ENCODE measurements at regions of chr17 and their contacts with region 1.

Region 1: DNA sequence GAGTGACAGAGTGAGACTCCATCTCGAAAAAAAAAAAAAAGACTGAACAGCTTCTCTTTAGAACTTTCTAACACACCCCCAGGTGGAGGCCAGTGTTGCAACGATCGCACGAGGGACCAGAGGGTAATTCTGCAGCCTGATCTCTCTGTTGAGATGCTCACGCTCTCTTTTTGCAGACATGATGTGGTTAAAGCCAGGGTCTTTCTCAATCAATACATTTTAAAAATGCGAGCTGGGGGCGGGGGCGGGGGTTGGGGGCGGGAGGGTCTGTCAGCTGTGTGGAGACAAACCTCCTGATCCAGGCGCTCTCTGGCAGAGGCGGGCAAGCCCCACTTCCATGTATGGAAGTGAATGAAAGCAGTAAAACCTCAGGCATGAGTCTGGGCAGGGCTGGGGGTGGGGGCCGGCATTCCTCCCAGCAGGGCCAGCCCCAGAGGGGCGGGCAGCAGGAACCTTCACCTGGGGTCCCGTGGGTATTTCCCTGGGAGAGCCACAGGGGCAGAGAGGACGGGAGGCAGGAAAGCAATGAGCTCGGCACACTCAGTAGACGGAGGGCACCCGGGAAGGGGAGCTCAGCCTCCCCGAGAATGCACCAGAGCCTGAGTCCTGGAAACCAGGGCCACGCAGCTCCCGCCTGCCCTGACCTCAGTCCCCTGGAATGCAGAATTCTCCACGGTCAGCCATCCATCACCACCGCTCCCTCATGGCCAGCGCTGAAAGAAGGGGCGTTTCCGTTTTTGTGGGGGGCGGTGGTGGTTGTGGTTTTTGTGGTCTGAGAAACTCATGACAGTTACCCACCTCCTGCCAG is 28.0 kb downstream of the NXN start:
- DNase-seq: no peak
- ATAC-seq: peak in 7 of 8 donors; percentile 27 to 74 (median 52)
- H3K4me3 ChIP-seq: peak overlapping the region in 4 of 10 donors; percentile 5 to 29 (median 19)
- H3K27ac ChIP-seq: peak overlapping the region in 1 of 10 donors; percentile 11
- H3K4me1 ChIP-seq: peaks cover 0 to 32% (median 11%) of the 10 kb centered on the region in 9 donors
- H3K27me3 ChIP-seq: peaks cover 0 to 3% (median 0%) of the 10 kb centered on the region in 7 donors
- CTCF ChIP-seq: no peak

Region 2: DNA sequence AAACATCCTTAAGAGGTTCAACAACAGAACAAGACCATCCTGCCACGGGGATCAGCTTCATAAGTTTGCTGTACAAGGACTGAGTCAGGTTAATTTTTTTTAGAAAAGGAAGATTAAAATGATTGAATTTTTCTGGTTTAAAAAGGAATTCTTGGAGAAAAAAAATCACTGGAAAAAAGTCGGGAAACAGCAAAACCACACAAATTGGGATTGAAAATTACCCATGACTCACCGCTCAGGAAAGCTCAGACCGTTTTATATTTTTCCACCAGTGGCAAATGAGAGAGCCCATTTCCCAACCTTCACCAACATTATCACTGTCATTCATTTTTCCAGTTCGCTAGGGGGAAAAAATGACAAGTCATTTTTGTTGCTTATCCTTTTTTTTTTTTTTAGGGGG is 122.8 kb before region 1 on chr17:
- intact Hi-C with region 1: loop called in 1 of 10 experiments (anchors 10 kb)
- DNase-seq: no peak
- ATAC-seq: no peak
- H3K4me3 ChIP-seq: no peak overlapping the region
- H3K27ac ChIP-seq: no peak overlapping the region
- H3K4me1 ChIP-seq: no peaks in the 10 kb centered on the region
- H3K27me3 ChIP-seq: no peaks in the 10 kb centered on the region
- CTCF ChIP-seq: no peak